ENCODE measurements at regions of chr1 and their contacts with region 1.

Region 1: DNA sequence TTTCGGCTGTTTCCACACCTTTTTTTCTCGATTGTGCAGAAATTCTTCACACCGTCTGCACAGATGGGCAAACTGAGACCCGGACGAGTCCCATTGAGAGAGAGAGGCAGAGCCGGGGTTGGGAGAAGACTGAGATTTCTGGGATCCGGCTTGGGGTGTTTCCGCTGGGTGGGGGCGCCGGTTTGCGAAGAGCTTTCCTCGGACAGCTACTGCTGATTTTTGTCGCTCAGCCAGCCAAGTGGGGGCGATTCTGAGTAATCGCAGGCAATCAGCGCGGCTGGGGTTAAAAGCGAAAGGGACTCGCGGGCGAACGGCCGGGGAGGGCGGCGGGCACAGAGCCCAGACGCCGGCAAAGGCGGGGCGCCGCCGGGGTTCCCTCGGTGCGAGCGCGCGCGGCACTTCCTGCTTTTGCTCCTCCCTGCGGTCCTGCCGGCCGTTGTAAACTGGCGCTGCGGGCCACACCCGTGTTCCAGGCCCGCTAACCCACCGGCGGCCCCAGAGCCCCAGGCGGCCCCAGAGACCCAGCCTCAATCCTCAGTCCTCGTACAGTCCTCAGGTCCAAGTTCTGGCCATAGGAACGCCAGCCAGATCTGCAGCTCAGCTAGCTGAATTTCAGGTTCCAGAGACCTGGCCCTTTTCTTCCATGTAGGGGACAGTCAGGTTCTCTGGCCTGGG is 32.4 kb upstream of the JUN start:
- DNase-seq: peak; percentile 96
- H3K4me3 Mint-ChIP-seq: peak overlapping the region; percentile 87
- H3K27ac Mint-ChIP-seq: peak overlapping the region; percentile 87
- H3K4me1 Mint-ChIP-seq: peaks cover 47% of the 10 kb centered on the region
- H3K27me3 Mint-ChIP-seq: no peaks in the 10 kb centered on the region

Region 2: GRCh38 chr1:58367217-58367616 is 449.0 kb before region 1 on chr1:
- intact Hi-C with region 1: no loop called
- DNase-seq: no peak
- H3K4me3 Mint-ChIP-seq: no peak overlapping the region
- H3K27ac Mint-ChIP-seq: no peak overlapping the region
- H3K4me1 Mint-ChIP-seq: no peaks in the 10 kb centered on the region
- H3K27me3 Mint-ChIP-seq: no peaks in the 10 kb centered on the region

Region 3: GRCh38 chr1:58755468-58755872 is 60.7 kb before region 1 on chr1:
- intact Hi-C with region 1: loop called (anchors 1 kb)
- DNase-seq: peak; percentile 84
- H3K4me3 Mint-ChIP-seq: peak overlapping the region; percentile 61
- H3K27ac Mint-ChIP-seq: peak overlapping the region; percentile 91
- H3K4me1 Mint-ChIP-seq: peaks cover 46% of the 10 kb centered on the region
- H3K27me3 Mint-ChIP-seq: no peaks in the 10 kb centered on the region

Region 4: GRCh38 chr1:58903514-58904298 is 87.5 kb after region 1 on chr1:
- intact Hi-C with region 1: loop called (anchors 1 kb)
- DNase-seq: peak; percentile 94
- H3K4me3 Mint-ChIP-seq: peak overlapping the region; percentile 80
- H3K27ac Mint-ChIP-seq: peak overlapping the region; percentile 91
- H3K4me1 Mint-ChIP-seq: peaks cover 20% of the 10 kb centered on the region
- H3K27me3 Mint-ChIP-seq: no peaks in the 10 kb centered on the region

Region 5: DNA sequence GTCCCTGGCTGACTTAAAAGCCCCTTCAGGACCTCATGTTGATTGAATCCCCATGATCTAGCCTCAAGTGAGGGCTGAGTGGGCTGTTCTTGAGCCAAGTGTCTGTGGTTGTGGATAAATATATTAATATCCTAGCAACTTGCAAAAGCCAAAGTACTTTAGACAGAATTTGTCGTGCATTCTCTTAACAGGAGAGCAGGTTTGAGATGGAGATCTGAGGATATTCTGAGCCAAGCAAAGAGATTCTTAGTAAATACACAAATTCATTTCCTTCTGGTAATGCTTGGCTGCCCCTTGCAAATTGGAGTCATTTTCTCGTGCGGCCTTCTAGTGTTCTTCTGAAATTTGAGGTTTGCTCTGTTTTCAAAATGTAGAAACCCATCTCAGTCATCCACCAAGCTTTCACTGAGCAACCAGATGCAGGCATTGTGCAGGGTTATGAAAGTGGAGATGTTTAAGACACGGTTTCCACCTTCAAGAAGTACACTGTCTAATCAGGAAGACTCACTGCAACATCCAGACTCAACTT is 209.8 kb after region 1 on chr1:
- intact Hi-C with region 1: loop called (anchors 2 kb)
- DNase-seq: no peak
- H3K4me3 Mint-ChIP-seq: peak overlapping the region; percentile 75
- H3K27ac Mint-ChIP-seq: no peak overlapping the region
- H3K4me1 Mint-ChIP-seq: peaks cover 35% of the 10 kb centered on the region
- H3K27me3 Mint-ChIP-seq: no peaks in the 10 kb centered on the region

Region 6: GRCh38 chr1:59296358-59297256 is 480.4 kb after region 1 on chr1 and contains the start of gene FGGY:
- intact Hi-C with region 1: loop called (anchors 10 kb)
- DNase-seq: peak; percentile 96
- H3K4me3 Mint-ChIP-seq: peak within 1 kb of the TSS; percentile 85
- H3K27ac Mint-ChIP-seq: peak within 1 kb of the TSS; percentile 91
- H3K4me1 Mint-ChIP-seq: peaks cover 36% of the 10 kb centered on the region
- H3K27me3 Mint-ChIP-seq: no peaks in the 10 kb centered on the region
- total RNA-seq, gene FGGY: 6.2 and 8.1 TPM in 2 replicates